ENCODE measurements at regions of chr3 and their contacts with region 1.

Region 1: GRCh38 chr3:193997228-193998122 is 138.5 kb upstream of the HES1 start:
- DNase-seq: no peak
- ATAC-seq: peak; percentile 32 to 79 (median 64)
- H3K4me3 ChIP-seq: no peak overlapping the region
- H3K27ac ChIP-seq: no peak overlapping the region
- H3K4me1 ChIP-seq: no peaks in the 10 kb centered on the region
- H3K27me3 ChIP-seq: no peaks in the 10 kb centered on the region
- CTCF ChIP-seq: no peak

Region 2: DNA sequence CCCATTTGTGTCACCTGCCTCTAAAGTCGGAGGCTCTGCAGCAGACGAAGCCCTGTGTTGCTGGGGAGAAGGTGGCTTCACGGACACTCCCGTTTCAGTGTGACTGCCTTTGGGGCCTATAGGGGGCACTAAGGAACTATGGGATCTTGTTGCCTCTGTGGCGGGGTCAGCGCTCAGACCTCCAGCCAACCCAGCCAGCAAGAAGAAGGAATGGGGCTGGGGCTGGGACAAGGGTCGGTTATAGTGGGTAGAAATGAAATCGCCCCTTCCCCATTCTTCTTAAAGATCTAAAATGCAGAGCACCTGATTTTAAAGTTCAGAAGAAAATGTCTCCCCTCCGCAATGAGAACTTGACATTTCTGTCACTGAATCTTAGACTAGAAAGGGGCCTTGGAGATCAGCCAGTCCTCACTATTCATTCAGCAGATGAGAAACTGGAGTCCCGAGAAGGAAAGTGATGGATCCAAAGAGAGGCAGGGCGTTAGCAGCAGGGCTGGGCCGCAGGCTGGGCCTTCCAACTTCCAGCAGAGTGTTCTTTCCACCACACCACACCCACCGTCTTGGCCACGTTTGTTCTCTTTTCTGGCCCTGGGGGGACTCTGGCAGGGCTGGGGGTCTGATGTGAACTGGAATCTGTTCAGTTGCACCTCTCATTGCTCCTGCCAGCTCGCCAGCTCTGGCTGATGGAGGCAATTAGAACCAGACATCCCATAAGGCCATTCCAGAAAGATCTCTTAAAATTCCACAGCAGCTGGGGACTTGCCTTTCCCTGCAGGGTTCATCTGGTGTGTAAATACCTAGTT is 209.1 kb before region 1 on chr3:
- intact Hi-C with region 1: loop called in 1 of 3 experiments (anchors 10 kb)
- DNase-seq: peak; percentile 47 to 73 (median 66)
- ATAC-seq: peak; percentile 78 to 95 (median 92)
- H3K4me3 ChIP-seq: no peak overlapping the region
- H3K27ac ChIP-seq: no peak overlapping the region
- H3K4me1 ChIP-seq: peaks cover 16 to 27% (median 23%) of the 10 kb centered on the region in 3 donors
- H3K27me3 ChIP-seq: no peaks in the 10 kb centered on the region
- CTCF ChIP-seq: peak; percentile 57 to 78 (median 65)

Region 3: DNA sequence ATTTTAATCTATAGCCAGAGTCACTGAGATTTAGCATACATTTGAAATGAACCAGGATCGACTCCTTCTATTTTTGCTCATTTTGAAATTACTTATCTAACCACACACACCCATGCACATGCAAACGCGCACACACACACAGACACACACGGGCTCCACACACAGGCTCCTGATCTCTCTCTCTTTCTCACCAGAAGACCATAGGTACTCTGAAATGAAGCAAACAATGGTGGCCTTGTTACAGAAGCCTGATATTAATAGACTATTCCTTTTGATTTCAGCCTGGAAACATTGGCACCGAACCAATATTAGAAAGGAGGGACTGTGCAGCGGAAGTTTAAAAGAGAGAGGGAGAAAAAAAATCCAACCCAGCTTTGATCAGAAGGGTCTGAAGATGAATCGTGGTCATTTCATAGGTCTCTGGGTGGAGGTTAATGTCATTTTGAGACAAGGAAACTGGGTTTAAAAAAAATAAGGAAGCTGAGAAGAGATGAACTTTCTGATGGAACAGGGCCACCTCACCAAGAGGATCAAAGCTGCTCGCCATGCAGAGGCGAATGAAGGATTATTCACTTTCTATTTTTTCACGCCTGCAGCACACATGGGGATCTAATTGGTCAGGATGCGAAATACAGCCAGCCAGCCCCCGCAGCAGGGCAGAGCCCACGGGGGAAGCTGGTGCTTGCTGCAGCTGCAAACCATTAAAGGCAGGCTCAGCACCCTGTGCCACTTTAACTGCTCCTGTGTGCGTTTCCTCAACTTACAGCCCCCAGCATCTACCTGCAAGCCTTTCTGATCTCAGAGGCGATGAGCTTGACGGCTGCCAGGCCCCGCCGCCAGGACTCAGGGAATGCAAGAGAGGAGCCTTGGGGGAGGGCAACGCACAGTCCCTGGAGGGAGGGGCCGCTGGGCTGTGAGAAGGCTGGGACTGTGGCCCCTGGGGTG is 227.3 kb after region 1 on chr3:
- intact Hi-C with region 1: no loop called
- DNase-seq: no peak
- ATAC-seq: peak; percentile 63 to 89 (median 76)
- H3K4me3 ChIP-seq: no peak overlapping the region
- H3K27ac ChIP-seq: peak overlapping the region in 2 of 4 donors; percentile 23 to 37
- H3K4me1 ChIP-seq: peaks cover 0 to 9% (median 0%) of the 10 kb centered on the region in 3 donors
- H3K27me3 ChIP-seq: no peaks in the 10 kb centered on the region
- CTCF ChIP-seq: no peak

Region 4: DNA sequence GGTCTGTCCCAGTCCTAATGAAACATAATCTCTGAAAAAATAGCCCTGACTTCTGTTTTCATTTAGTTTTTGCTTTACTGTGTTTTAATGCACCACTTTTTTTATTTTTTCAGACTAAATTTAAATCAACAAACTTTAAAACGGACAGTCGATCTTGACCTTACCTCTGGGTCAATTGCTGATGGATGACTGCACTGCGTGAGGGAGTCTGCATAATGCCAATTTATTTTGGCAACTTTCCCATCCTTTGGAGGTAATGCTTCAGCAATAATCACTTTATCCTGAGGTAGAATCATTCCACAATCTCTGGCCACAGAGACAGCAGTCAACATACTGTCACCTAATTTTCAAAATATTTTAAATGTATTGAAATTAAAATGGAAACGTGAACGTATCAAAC is 434.1 kb after region 1 on chr3:
- intact Hi-C with region 1: no loop called
- DNase-seq: no peak
- ATAC-seq: peak in 1 of 4 donors; percentile 35
- H3K4me3 ChIP-seq: no peak overlapping the region
- H3K27ac ChIP-seq: no peak overlapping the region
- H3K4me1 ChIP-seq: no peaks in the 10 kb centered on the region
- H3K27me3 ChIP-seq: no peaks in the 10 kb centered on the region
- CTCF ChIP-seq: no peak

Measured in pancreas (tissue), 10 donors.